Left cardiac atrium (tissue), 4 donors: ENCODE measurements at regions of chr1 and their contacts with region 1.

Region 1: DNA sequence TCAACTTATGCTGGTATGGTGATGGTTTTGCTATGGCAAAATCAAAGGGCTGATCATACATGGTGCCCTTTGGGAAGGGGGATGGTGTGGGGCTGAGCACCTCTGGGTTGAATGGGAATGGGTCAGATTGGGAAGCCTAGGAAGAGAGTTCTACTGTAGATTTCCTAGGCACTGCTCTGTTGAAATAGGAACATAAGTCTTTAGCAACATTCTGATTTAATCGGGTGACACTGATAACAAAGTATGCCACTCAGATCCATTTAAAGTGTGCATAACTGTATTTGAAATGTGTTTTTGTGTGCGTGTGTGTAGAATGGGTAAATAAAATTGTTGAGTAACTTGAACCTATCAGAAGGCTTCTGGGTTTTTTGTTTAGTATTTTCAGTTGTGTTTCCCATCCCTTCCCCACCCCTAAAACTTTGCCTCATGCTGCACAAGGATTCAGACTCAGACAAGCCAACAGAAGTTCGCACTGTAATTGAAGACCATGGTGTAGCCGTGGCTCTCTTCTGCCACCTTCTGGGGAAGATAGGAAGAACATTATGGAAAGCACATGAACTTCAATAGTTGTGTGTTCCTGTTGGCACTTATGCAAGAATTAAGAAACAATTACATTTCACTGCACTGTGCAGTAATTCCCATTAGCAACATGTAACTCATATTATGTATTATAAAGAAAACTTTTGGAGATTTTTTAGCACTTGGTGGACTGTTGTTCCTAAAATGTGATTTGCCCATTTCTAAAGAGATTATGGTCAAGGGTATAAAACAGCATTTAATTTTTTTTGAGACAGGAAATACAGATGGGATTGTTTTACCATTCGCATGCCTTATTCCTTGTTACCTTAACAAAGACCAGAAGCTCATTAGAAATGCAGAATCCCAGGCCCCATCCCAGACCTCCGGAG is 10.9 kb upstream of the C4BPB start:
- DNase-seq: no peak
- ATAC-seq: peak; percentile 87 to 91

Region 2: DNA sequence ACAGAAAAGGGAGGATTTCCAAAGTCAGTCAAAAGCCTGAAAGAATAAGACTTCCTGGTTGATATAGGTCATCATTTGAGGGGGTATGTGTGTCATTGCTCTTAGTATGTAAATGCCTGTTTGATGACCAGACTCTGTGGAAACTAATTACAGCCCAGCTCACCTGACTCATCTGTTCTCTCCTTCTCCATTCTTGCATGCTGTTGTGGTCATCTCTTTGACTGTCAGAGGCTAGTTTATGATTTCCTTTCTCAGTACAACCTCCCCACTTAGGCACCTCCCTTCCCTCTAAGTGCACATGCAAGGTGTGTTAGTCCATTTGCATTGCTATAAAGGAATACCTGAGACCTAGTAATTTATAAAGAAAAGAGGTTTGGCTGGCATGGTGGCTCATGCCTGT is 42.7 kb before region 1 on chr1:
- intact Hi-C with region 1: loop called in 1 of 2 experiments (anchors 5 kb)
- DNase-seq: no peak
- ATAC-seq: no peak

Region 3: DNA sequence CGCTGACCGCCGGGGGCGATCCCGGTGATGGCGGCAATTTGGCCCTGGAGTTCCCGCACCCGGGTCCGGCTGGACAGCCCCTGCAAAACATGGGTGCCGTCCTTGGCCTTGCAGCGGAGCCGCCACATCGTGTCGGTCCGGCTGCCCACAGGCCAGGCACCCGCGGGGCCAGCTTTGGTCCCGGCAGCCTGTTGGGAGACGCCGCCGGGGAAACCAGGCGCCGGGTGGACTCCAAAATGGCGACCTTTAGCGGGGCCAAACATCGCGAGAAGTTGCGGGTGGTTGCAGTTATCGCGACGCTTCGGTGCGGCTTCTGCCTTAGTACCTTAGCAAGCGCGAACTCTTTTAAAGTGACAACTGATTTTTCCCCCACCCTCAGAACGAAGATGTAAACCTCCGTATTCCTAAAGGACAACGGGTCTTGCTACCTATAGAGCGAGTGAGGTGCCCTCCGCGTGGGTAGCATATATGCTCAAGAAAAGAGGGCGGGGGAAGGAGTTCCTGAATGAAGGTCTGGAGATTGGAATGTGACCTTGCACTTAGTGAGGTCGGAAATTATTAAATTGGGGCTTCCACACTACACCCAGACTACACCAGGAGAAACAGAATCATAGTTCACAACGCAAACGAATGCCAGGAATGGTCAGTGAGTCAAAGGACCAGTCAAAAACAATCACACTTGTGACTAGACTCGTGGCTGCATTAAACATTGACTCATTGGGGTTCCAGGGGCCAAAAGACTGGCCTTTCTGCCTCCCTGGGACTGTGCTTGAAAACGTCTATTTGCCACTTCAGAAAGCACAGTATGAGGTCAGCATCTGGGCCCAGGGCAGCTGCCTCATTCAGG is 26.7 kb before region 1 on chr1 and contains the start of gene YOD1:
- intact Hi-C with region 1: loop called in 1 of 2 experiments (anchors 2 kb)
- DNase-seq: peak; percentile 95
- ATAC-seq: peak; percentile 75 to 81
- total RNA-seq, gene YOD1: 3.4 to 5.9 TPM